B cell (primary cell): ENCODE measurements at regions of chr6 and their contacts with region 1.

Region 1: GRCh38 chr6:32355018-32355417 is 16.7 kb downstream of the TSBP1 start:
- DNase-seq: no peak
- ATAC-seq: no peak
- H3K4me3 ChIP-seq: no peak overlapping the region
- H3K4me3 Mint-ChIP-seq: no peak overlapping the region
- H3K27ac ChIP-seq: no peak overlapping the region
- H3K27ac Mint-ChIP-seq: peak overlapping the region; percentile 2
- H3K4me1 ChIP-seq: no peaks in the 10 kb centered on the region
- H3K4me1 Mint-ChIP-seq: peaks cover 14% of the 10 kb centered on the region
- H3K27me3 ChIP-seq: no peaks in the 10 kb centered on the region
- H3K27me3 Mint-ChIP-seq: no peaks in the 10 kb centered on the region
- CTCF ChIP-seq: no peak

Region 2: GRCh38 chr6:32367641-32368040 is 12.6 kb after region 1 on chr6:
- CTCF ChIA-PET with region 1: no interaction called
- POLR2A ChIA-PET with region 1: no interaction called
- intact Hi-C with region 1: loop called (anchors 2 kb)
- DNase-seq: no peak
- ATAC-seq: no peak
- H3K4me3 ChIP-seq: no peak overlapping the region
- H3K4me3 Mint-ChIP-seq: no peak overlapping the region
- H3K27ac ChIP-seq: no peak overlapping the region
- H3K27ac Mint-ChIP-seq: no peak overlapping the region
- H3K4me1 ChIP-seq: no peaks in the 10 kb centered on the region
- H3K4me1 Mint-ChIP-seq: no peaks in the 10 kb centered on the region
- H3K27me3 ChIP-seq: no peaks in the 10 kb centered on the region
- H3K27me3 Mint-ChIP-seq: no peaks in the 10 kb centered on the region
- CTCF ChIP-seq: no peak